CD8-positive, alpha-beta T cell (primary cell): ENCODE measurements at regions of chr11 and their contacts with region 1.

Region 1: DNA sequence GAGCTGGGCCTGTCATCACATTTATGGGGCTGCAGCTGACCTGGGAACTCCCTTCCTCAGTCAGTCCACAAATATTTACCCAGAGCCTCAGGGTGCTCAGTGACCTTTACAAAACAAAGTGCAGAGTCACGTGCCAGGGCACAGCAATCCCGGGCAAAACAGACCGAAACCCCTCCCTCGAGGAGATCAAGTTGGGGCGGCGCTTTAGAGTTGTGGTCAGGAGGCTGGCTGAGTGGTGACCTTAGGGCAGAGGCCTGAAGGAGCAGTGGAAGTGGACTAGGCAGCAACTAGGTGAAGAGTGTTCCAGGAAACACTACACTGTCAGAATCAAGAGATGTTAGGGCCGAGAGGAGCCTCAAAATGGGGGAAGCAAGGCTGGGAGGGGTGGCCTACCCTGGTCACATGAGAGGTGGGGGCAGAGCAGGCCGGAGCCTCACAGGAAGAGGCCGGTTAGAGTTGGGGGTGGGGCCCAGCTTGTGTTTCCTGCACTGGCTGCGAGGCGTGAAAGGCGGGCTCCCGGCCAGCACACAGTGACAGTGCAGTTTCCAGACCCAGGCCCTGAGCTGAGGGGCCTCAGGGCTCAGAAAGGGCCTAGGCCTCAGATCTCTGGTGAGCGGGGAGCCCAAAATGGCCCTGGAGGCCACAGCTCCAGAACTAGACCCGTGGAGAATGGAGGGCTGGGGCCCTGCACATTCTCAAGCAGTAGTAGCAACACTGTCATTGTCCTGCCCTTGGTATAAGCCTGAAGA is 3.7 kb upstream of the NEAT1 start:
- DNase-seq: peak in 8 of 9 experiments; percentile 71 to 90 (median 82)
- ATAC-seq: peak; percentile 4
- H3K4me3 ChIP-seq: peak overlapping the region; percentile 76 to 95
- H3K4me3 Mint-ChIP-seq: peak overlapping the region; percentile 94
- H3K27ac ChIP-seq: peak overlapping the region; percentile 99 to 100
- H3K27ac Mint-ChIP-seq: peak overlapping the region; percentile 98
- H3K4me1 ChIP-seq: peaks cover 58% of the 10 kb centered on the region
- H3K4me1 Mint-ChIP-seq: peaks cover 55% of the 10 kb centered on the region
- H3K27me3 ChIP-seq: no peaks in the 10 kb centered on the region
- H3K27me3 Mint-ChIP-seq: no peaks in the 10 kb centered on the region
- CTCF ChIP-seq: no peak

Region 2: GRCh38 chr11:64778508-64779346 is 640.2 kb before region 1 on chr11 and contains the start of gene SF1:
- CTCF ChIA-PET with region 1: no interaction called
- POLR2A ChIA-PET with region 1: interaction called, 3 read pairs
- intact Hi-C with region 1: loop called in 1 of 2 experiments (anchors 10 kb)
- DNase-seq: peak; percentile 97 to 100 (median 99)
- ATAC-seq: peak; percentile 82
- H3K4me3 ChIP-seq: peak within 1 kb of the TSS; percentile 70 to 97
- H3K4me3 Mint-ChIP-seq: peak within 1 kb of the TSS; percentile 93
- H3K27ac ChIP-seq: peak within 1 kb of the TSS; percentile 93 to 98
- H3K27ac Mint-ChIP-seq: peak within 1 kb of the TSS; percentile 99
- H3K4me1 ChIP-seq: peaks cover 53% of the 10 kb centered on the region
- H3K4me1 Mint-ChIP-seq: peaks cover 58% of the 10 kb centered on the region
- H3K27me3 ChIP-seq: no peaks in the 10 kb centered on the region
- H3K27me3 Mint-ChIP-seq: no peaks in the 10 kb centered on the region
- CTCF ChIP-seq: no peak
- total RNA-seq, gene SF1: 1,574 to 1,625 TPM

Region 3: GRCh38 chr11:65382033-65382807 is 36.7 kb before region 1 on chr11 and contains the start of gene SLC25A45:
- CTCF ChIA-PET with region 1: interaction called, 21 read pairs
- POLR2A ChIA-PET with region 1: interaction called, 10 read pairs
- intact Hi-C with region 1: loop called (anchors 1 kb)
- DNase-seq: peak; percentile 77 to 96 (median 92)
- ATAC-seq: peak; percentile 83
- H3K4me3 ChIP-seq: peak within 1 kb of the TSS; percentile 60 to 98
- H3K4me3 Mint-ChIP-seq: peak within 1 kb of the TSS; percentile 87
- H3K27ac ChIP-seq: peak within 1 kb of the TSS; percentile 97 to 100
- H3K27ac Mint-ChIP-seq: peak within 1 kb of the TSS; percentile 99
- H3K4me1 ChIP-seq: peaks cover 54% of the 10 kb centered on the region
- H3K4me1 Mint-ChIP-seq: peaks cover 42% of the 10 kb centered on the region
- H3K27me3 ChIP-seq: no peaks in the 10 kb centered on the region
- H3K27me3 Mint-ChIP-seq: no peaks in the 10 kb centered on the region
- CTCF ChIP-seq: peak; percentile 81
- total RNA-seq, gene SLC25A45: 27.8 to 29.6 TPM

Region 4: DNA sequence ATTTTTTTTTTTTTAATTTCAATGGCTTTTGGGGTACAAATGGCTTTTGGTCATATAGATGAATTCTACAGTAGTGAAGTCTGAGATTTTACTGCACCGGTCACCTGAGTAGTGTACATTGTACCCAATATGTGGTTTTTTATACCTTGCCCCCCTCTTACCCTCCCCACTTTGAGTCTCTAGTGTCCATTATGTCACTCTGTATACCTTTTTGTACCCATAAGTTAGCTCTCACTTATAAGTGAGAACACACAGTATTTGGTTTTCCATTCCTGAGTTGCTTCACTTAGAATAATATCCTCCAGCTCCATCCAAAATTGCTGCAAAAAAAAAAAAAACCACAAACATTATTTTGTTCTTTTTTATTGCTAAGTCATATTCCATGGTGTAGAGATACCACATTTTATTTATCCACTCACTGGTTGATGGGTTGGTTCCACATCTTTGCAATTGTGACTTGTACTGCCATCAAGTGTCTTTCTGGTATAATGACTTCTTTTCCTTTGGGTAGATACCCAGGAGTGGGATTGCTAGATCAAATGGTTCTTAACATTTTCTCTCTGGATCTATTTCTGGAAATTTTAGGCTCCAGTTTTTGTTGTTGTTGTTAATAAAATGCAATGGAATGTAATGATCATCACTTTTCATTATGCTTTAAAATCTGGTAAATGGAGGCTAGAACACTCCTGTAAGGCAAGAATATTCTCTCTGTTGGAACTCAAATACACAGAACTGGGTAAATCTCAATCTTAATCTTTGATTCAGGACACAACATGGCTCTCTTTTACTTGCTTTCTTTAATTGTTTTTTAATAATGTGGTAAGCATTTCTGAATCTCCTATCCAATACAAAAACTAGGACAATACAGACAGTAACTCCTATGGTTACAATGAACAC is 14.0 kb after region 1 on chr11:
- CTCF ChIA-PET with region 1: interaction called, 42 read pairs
- POLR2A ChIA-PET with region 1: interaction called, 159 read pairs
- intact Hi-C with region 1: loop called (anchors 1 kb)
- DNase-seq: peak in 2 of 9 experiments; percentile 70 to 81
- ATAC-seq: peak; percentile 31
- H3K4me3 ChIP-seq: no peak overlapping the region
- H3K4me3 Mint-ChIP-seq: no peak overlapping the region
- H3K27ac ChIP-seq: no peak overlapping the region
- H3K27ac Mint-ChIP-seq: peak overlapping the region; percentile 81
- H3K4me1 ChIP-seq: peaks cover 58% of the 10 kb centered on the region
- H3K4me1 Mint-ChIP-seq: peaks cover 79% of the 10 kb centered on the region
- H3K27me3 ChIP-seq: no peaks in the 10 kb centered on the region
- H3K27me3 Mint-ChIP-seq: no peaks in the 10 kb centered on the region
- CTCF ChIP-seq: peak; percentile 71

Region 5: GRCh38 chr11:65471410-65471762 is 52.5 kb after region 1 on chr11:
- CTCF ChIA-PET with region 1: interaction called, 41 read pairs
- POLR2A ChIA-PET with region 1: interaction called, 94 read pairs
- intact Hi-C with region 1: loop called (anchors 1 kb)
- DNase-seq: peak in 5 of 9 experiments; percentile 20 to 52 (median 36)
- ATAC-seq: peak; percentile 1
- H3K4me3 ChIP-seq: peak overlapping the region; percentile 11 to 42
- H3K4me3 Mint-ChIP-seq: no peak overlapping the region
- H3K27ac ChIP-seq: peak overlapping the region; percentile 60 to 87
- H3K27ac Mint-ChIP-seq: peak overlapping the region; percentile 98
- H3K4me1 ChIP-seq: peaks cover 17% of the 10 kb centered on the region
- H3K4me1 Mint-ChIP-seq: peaks cover 23% of the 10 kb centered on the region
- H3K27me3 ChIP-seq: no peaks in the 10 kb centered on the region
- H3K27me3 Mint-ChIP-seq: no peaks in the 10 kb centered on the region
- CTCF ChIP-seq: no peak

Region 6: DNA sequence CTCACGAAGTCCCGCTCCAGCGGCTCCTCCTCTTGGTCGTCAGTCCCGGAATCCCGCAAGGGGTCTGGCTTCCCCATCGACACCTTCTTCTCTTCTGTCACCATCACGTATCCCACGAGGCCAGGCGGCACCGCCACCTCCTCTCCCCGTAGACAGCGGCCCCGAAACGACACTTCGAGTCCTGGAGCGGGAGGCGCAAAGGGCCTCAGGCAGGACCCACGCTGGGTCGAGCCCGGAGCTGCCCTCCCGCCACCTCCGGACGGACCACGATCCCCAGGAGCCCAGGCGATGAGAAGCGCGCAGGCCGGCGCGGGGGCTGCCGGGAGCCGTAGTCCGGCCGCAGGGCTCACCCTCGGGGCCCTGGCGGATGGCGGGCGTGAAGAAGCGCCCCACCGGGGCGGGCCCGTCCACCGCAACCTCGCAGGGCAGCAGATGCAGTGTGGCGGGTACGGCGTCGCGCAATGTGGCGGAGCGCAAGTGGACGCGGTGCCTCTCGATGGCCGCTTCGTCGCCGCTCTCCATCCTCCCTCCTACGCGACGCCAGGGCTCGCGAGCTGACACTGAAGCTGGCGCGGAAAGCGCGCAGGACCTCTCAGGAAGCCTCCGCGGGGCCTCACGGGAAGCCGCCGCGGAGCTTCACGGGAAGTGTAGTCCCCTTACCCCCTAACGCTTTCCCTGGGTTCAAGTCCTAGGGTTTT is 301.5 kb after region 1 on chr11 and contains the start of gene RNASEH2C:
- CTCF ChIA-PET with region 1: no interaction called
- POLR2A ChIA-PET with region 1: no interaction called
- intact Hi-C with region 1: no loop called
- DNase-seq: peak; percentile 53 to 89 (median 73)
- ATAC-seq: peak; percentile 93
- H3K4me3 ChIP-seq: peak within 1 kb of the TSS; percentile 84 to 92
- H3K4me3 Mint-ChIP-seq: peak within 1 kb of the TSS; percentile 90
- H3K27ac ChIP-seq: peak within 1 kb of the TSS; percentile 70 to 73
- H3K27ac Mint-ChIP-seq: peak within 1 kb of the TSS; percentile 88
- H3K4me1 ChIP-seq: peaks cover 22% of the 10 kb centered on the region
- H3K4me1 Mint-ChIP-seq: peaks cover 33% of the 10 kb centered on the region
- H3K27me3 ChIP-seq: no peaks in the 10 kb centered on the region
- H3K27me3 Mint-ChIP-seq: no peaks in the 10 kb centered on the region
- CTCF ChIP-seq: no peak
- total RNA-seq, gene RNASEH2C: 27.7 to 32.0 TPM

Region 7: GRCh38 chr11:66317723-66318599 is 899.1 kb after region 1 on chr11:
- CTCF ChIA-PET with region 1: no interaction called
- POLR2A ChIA-PET with region 1: interaction called, 5 read pairs
- intact Hi-C with region 1: loop called in 1 of 2 experiments (anchors 5 kb)
- DNase-seq: peak; percentile 67 to 98 (median 86)
- ATAC-seq: peak; percentile 85
- H3K4me3 ChIP-seq: peak overlapping the region; percentile 33 to 74
- H3K4me3 Mint-ChIP-seq: peak overlapping the region; percentile 87
- H3K27ac ChIP-seq: peak overlapping the region; percentile 92 to 98
- H3K27ac Mint-ChIP-seq: peak overlapping the region; percentile 99
- H3K4me1 ChIP-seq: peaks cover 38% of the 10 kb centered on the region
- H3K4me1 Mint-ChIP-seq: peaks cover 55% of the 10 kb centered on the region
- H3K27me3 ChIP-seq: no peaks in the 10 kb centered on the region
- H3K27me3 Mint-ChIP-seq: no peaks in the 10 kb centered on the region
- CTCF ChIP-seq: no peak